ENCODE measurements at regions of chr5 and their contacts with region 1.

Region 1: GRCh38 chr5:148469501-148469935 is 85.8 kb downstream of the FBXO38 start:
- DNase-seq: no peak
- H3K4me3 Mint-ChIP-seq: no peak overlapping the region
- H3K27ac Mint-ChIP-seq: no peak overlapping the region
- H3K4me1 Mint-ChIP-seq: no peaks in the 10 kb centered on the region
- H3K27me3 Mint-ChIP-seq: no peaks in the 10 kb centered on the region
- CTCF ChIP-seq: no peak

Region 2: DNA sequence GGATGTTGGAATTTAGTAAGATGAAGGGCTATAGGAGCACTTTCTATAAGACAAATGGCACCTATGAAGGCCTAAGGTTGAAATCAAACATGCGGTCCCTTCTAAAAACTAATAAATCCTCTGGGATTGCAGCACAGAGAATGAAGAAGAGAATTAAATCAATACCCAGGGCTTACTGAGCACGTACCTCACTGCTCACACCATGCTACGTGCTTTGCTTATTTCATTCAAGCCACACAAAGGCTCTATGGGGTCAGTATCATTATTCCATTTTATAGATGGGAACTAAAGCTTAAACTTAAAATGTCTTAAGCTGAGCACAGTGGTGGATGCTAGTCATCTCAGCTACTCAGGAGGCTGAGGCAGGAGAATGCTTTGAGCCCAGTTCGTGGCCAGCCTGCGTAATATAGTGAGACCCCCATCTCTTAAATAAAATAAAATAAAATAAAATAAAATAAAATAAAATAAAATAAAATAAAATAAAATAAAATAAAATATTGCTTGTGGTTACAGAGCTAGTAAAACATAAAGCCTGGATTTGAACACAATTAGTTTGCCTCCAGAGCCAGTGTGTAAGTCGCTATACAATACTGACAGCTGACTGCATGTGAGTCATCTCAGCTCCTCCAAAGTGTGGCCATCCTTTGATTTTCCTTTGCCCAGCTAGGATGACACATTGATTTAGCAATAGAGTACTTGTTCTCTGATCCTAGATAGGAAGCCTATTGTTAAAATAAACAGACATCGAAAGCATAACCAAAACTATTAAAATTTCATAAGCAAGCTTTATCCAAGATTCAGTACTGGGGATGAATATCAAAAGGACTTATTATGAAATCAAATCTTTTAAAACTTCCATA is 938.8 kb before region 1 on chr5:
- CTCF ChIA-PET with region 1: no interaction called
- intact Hi-C with region 1: no loop called
- DNase-seq: no peak
- H3K4me3 Mint-ChIP-seq: no peak overlapping the region
- H3K27ac Mint-ChIP-seq: no peak overlapping the region
- H3K4me1 Mint-ChIP-seq: peaks cover 9% of the 10 kb centered on the region
- H3K27me3 Mint-ChIP-seq: no peaks in the 10 kb centered on the region
- CTCF ChIP-seq: no peak

Region 3: DNA sequence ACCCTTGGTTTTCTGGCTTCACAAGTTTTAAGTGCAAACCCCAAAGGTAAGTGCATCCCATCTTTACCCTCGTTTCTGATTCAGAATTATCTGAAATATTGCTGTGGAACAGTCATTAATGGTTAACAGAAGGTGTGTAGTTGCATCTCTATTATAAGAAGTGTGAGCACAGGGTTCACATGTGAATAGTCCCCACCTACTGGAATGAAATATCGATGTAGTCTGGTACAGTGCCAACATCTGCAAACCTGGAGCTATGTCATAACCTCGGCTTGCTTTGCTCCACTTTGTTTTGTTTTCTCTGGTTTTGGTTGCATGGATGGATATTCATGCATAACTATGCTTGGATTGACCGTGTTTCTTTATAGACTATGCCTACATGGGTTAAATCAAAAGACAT is 172.2 kb after region 1 on chr5:
- CTCF ChIA-PET with region 1: interaction called, 10 read pairs
- intact Hi-C with region 1: no loop called
- DNase-seq: peak; percentile 20
- H3K4me3 Mint-ChIP-seq: no peak overlapping the region
- H3K27ac Mint-ChIP-seq: no peak overlapping the region
- H3K4me1 Mint-ChIP-seq: peaks cover 18% of the 10 kb centered on the region
- H3K27me3 Mint-ChIP-seq: peaks cover 54% of the 10 kb centered on the region
- CTCF ChIP-seq: no peak